IMR-90 (cell line): ENCODE measurements at regions of chr2 and their contacts with region 1.

Region 1: GRCh38 chr2:185854915-185855314 is 116.3 kb downstream of the FSIP2 start:
- DNase-seq: no peak
- ATAC-seq: no peak
- H3K4me3 ChIP-seq: no peak overlapping the region
- H3K27ac ChIP-seq: no peak overlapping the region
- H3K4me1 ChIP-seq: no peaks in the 10 kb centered on the region
- H3K27me3 ChIP-seq: no peaks in the 10 kb centered on the region
- CTCF ChIP-seq: no peak
- POLR2A ChIP-seq: no peak
- RAD21 ChIP-seq: no peak

Region 2: GRCh38 chr2:185802913-185803312 is 52.0 kb before region 1 on chr2:
- CTCF ChIA-PET with region 1: no interaction called
- POLR2A ChIA-PET with region 1: no interaction called
- dilution Hi-C with region 1: no loop called
- in situ Hi-C with region 1: loop called (anchors 5 kb)
- intact Hi-C with region 1: no loop called
- DNase-seq: no peak
- ATAC-seq: no peak
- H3K4me3 ChIP-seq: no peak overlapping the region
- H3K27ac ChIP-seq: no peak overlapping the region
- H3K4me1 ChIP-seq: no peaks in the 10 kb centered on the region
- H3K27me3 ChIP-seq: no peaks in the 10 kb centered on the region
- CTCF ChIP-seq: no peak
- POLR2A ChIP-seq: no peak
- RAD21 ChIP-seq: no peak